ENCODE measurements at regions of chr20 and their contacts with region 1.

Region 1: GRCh38 chr20:35619196-35620095 is 3.8 kb downstream of the SPAG4 start:
- DNase-seq: peak; percentile 54 to 84 (median 68)
- ATAC-seq: peak; percentile 31
- H3K4me3 ChIP-seq: peak overlapping the region; percentile 70
- H3K4me3 Mint-ChIP-seq: peak overlapping the region; percentile 87 to 98 (median 91)
- H3K27ac ChIP-seq: peak overlapping the region; percentile 27
- H3K27ac Mint-ChIP-seq: peak overlapping the region; percentile 62 to 90 (median 85)
- H3K4me1 ChIP-seq: peaks cover 16 to 28% of the 10 kb centered on the region in 2 donors
- H3K4me1 Mint-ChIP-seq: peaks cover 13 to 45% (median 34%) of the 10 kb centered on the region in 7 donors
- H3K27me3 ChIP-seq: no peaks in the 10 kb centered on the region
- H3K27me3 Mint-ChIP-seq: peaks cover 0 to 3% (median 0%) of the 10 kb centered on the region in 5 donors

Region 2: DNA sequence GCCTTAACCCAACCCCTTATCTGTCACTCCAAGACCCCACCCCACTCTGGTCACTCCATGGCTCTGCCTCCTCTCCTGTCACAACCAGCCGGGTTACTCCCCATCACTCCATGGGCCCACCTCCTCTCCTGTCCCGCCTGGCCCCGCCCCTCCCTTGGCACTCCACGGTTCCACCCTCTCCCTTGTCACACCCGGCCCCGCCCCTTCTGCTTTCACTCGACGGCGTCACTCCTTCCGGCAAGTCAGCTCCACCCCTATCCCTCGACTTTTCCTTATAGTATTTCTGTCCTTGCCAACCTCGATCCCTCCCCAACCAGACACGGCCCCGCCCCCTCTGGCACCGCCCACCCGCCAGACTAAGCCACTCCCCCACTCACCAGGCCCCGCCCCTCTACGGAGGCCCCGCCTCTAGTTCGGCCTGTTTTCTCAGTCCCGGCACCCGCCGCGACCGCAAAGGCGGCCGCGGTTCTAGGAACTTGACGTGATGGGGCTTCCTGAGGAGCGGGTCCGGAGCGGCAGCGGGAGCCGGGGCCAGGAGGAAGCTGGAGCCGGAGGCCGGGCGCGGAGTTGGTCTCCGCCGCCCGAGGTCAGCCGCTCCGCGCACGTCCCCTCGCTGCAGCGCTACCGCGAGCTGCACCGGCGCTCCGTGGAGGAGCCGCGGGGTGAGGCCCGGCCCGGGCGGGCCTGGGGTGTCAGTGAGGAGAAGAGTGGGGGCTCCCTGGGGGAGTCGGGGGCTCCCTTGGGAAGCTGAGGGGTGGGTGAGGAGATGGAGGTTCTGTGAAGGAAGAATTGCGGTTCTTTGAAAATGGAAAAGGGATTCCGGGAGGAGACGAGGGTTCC is 743.1 kb before region 1 on chr20 and contains the start of gene ACSS2:
- CTCF ChIA-PET with region 1: no interaction called
- POLR2A ChIA-PET with region 1: no interaction called
- intact Hi-C with region 1: loop called in 1 of 2 experiments (anchors 5 kb)
- DNase-seq: peak; percentile 88 to 99 (median 92)
- ATAC-seq: peak; percentile 91
- H3K4me3 ChIP-seq: peak within 1 kb of the TSS; percentile 87
- H3K4me3 Mint-ChIP-seq: peak within 1 kb of the TSS; percentile 78 to 99 (median 90)
- H3K27ac ChIP-seq: peak within 1 kb of the TSS; percentile 74
- H3K27ac Mint-ChIP-seq: peak within 1 kb of the TSS; percentile 68 to 96 (median 88)
- H3K4me1 ChIP-seq: peaks cover 35 to 43% of the 10 kb centered on the region in 2 donors
- H3K4me1 Mint-ChIP-seq: peaks cover 47 to 79% (median 72%) of the 10 kb centered on the region in 7 donors
- H3K27me3 ChIP-seq: no peaks in the 10 kb centered on the region
- H3K27me3 Mint-ChIP-seq: no peaks in the 10 kb centered on the region
- total RNA-seq, gene ACSS2: 37.3 to 51.7 (median 43.3) TPM

Region 3: GRCh38 chr20:35454881-35455609 is 164.4 kb before region 1 on chr20 and contains the start of gene CEP250:
- CTCF ChIA-PET with region 1: no interaction called
- POLR2A ChIA-PET with region 1: interaction called, 5 read pairs
- intact Hi-C with region 1: loop called (anchors 1 kb)
- DNase-seq: peak; percentile 89 to 97 (median 96)
- ATAC-seq: peak; percentile 99
- H3K4me3 ChIP-seq: peak within 1 kb of the TSS; percentile 94
- H3K4me3 Mint-ChIP-seq: peak within 1 kb of the TSS; percentile 82 to 98 (median 93)
- H3K27ac ChIP-seq: peak within 1 kb of the TSS; percentile 94
- H3K27ac Mint-ChIP-seq: peak within 1 kb of the TSS; percentile 86 to 99 (median 98)
- H3K4me1 ChIP-seq: no peaks in the 10 kb centered on the region
- H3K4me1 Mint-ChIP-seq: peaks cover 0 to 38% (median 23%) of the 10 kb centered on the region in 7 donors
- H3K27me3 ChIP-seq: no peaks in the 10 kb centered on the region
- H3K27me3 Mint-ChIP-seq: no peaks in the 10 kb centered on the region
- total RNA-seq, gene CEP250: 34.5 to 75.0 (median 70.7) TPM

Region 4: GRCh38 chr20:35541783-35542588 is 77.5 kb before region 1 on chr20 and contains the start of gene ERGIC3:
- CTCF ChIA-PET with region 1: interaction called, 6 read pairs
- POLR2A ChIA-PET with region 1: interaction called, 5 read pairs
- intact Hi-C with region 1: loop called (anchors 1 kb)
- DNase-seq: peak; percentile 94 to 98 (median 95)
- ATAC-seq: peak; percentile 100
- H3K4me3 ChIP-seq: peak within 1 kb of the TSS; percentile 82
- H3K4me3 Mint-ChIP-seq: peak within 1 kb of the TSS; percentile 88 to 92 (median 91)
- H3K27ac ChIP-seq: peak within 1 kb of the TSS; percentile 77
- H3K27ac Mint-ChIP-seq: peak within 1 kb of the TSS; percentile 82 to 96 (median 91)
- H3K4me1 ChIP-seq: peaks cover 11 to 12% of the 10 kb centered on the region in 2 donors
- H3K4me1 Mint-ChIP-seq: peaks cover 9 to 32% (median 23%) of the 10 kb centered on the region in 7 donors
- H3K27me3 ChIP-seq: no peaks in the 10 kb centered on the region
- H3K27me3 Mint-ChIP-seq: no peaks in the 10 kb centered on the region
- total RNA-seq, gene ERGIC3: 139 to 158 (median 148) TPM

Region 5: DNA sequence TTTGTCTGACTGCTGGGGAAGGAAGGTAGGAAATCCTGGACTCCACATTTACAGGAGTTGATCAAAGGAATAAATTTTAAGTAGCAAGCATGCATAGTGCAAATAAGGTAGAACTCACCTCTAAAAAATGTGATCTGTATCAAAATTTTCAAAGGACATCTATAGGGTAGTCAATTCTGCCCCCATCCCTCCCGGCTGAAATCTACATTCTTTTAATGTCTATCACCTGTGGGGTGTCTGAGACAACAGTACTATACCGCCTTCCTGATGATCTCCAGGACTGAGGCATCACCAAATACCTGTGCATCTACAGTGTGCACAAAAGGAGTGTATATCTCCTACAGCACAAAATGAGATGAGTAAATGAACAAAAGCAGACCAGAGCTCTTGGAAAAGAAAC is 25.4 kb after region 1 on chr20:
- CTCF ChIA-PET with region 1: no interaction called
- POLR2A ChIA-PET with region 1: no interaction called
- intact Hi-C with region 1: no loop called
- DNase-seq: no peak
- ATAC-seq: no peak
- H3K4me3 ChIP-seq: no peak overlapping the region
- H3K4me3 Mint-ChIP-seq: no peak overlapping the region
- H3K27ac ChIP-seq: no peak overlapping the region
- H3K27ac Mint-ChIP-seq: peak overlapping the region in 7 of 9 donors; percentile 21 to 80 (median 43)
- H3K4me1 ChIP-seq: peaks cover 0 to 15% of the 10 kb centered on the region in 2 donors
- H3K4me1 Mint-ChIP-seq: peaks cover 64 to 94% (median 90%) of the 10 kb centered on the region in 7 donors
- H3K27me3 ChIP-seq: no peaks in the 10 kb centered on the region
- H3K27me3 Mint-ChIP-seq: no peaks in the 10 kb centered on the region

Region 6: DNA sequence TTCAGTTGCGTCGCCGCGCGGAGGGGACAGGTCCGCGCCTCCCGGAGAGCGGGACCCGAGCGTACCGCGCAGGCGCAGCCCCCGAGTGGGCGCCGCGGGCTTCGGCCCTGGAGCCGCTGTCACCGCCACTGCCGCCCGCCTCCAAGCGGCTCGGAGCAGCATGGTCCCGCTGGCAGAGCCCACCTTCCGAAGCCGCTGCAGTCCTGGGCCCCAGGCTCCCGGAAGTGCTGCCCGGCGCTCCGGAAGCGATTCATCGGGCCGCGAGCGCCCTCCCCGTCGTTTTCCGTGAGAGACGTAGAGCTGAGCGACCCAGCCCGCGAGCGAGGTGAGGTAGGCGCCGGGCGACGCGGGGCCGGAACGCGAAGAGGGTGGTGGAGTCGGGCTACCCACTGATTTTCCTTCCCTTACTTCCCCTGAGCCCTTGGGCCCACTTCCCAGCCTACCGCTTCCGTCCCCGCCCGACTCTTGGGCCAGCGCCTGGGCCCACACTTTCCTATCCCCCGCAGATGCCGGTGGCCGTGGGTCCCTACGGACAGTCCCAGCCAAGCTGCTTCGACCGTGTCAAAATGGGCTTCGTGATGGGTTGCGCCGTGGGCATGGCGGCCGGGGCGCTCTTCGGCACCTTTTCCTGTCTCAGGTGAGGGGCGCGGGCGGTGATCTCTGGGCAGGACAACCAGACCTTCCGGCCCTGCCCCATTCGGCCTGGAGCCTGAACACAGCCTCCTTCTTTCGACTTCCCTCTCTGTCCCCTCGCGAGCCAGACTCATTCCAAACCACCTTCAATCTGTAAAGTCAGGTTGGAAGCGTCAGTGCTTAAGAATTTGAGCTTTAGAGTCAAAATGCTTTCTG is 79.9 kb after region 1 on chr20 and contains the starts of genes NFS1 and ROMO1:
- CTCF ChIA-PET with region 1: no interaction called
- POLR2A ChIA-PET with region 1: interaction called, 7 read pairs
- intact Hi-C with region 1: loop called (anchors 1 kb)
- DNase-seq: peak; percentile 71 to 87 (median 82)
- ATAC-seq: peak; percentile 92
- H3K4me3 ChIP-seq: peak within 1 kb of the TSS; percentile 89
- H3K4me3 Mint-ChIP-seq: peak within 1 kb of the TSS; percentile 90 to 99 (median 98)
- H3K27ac ChIP-seq: peak within 1 kb of the TSS; percentile 87
- H3K27ac Mint-ChIP-seq: peak within 1 kb of the TSS; percentile 95 to 99 (median 97)
- H3K4me1 ChIP-seq: peaks cover 13 to 16% of the 10 kb centered on the region in 2 donors
- H3K4me1 Mint-ChIP-seq: peaks cover 15 to 66% (median 52%) of the 10 kb centered on the region in 7 donors
- H3K27me3 ChIP-seq: no peaks in the 10 kb centered on the region
- H3K27me3 Mint-ChIP-seq: no peaks in the 10 kb centered on the region
- total RNA-seq, gene NFS1: 18.2 to 41.1 (median 35.0) TPM
- total RNA-seq, gene ROMO1: 33.2 to 85.5 (median 38.5) TPM

Region 7: DNA sequence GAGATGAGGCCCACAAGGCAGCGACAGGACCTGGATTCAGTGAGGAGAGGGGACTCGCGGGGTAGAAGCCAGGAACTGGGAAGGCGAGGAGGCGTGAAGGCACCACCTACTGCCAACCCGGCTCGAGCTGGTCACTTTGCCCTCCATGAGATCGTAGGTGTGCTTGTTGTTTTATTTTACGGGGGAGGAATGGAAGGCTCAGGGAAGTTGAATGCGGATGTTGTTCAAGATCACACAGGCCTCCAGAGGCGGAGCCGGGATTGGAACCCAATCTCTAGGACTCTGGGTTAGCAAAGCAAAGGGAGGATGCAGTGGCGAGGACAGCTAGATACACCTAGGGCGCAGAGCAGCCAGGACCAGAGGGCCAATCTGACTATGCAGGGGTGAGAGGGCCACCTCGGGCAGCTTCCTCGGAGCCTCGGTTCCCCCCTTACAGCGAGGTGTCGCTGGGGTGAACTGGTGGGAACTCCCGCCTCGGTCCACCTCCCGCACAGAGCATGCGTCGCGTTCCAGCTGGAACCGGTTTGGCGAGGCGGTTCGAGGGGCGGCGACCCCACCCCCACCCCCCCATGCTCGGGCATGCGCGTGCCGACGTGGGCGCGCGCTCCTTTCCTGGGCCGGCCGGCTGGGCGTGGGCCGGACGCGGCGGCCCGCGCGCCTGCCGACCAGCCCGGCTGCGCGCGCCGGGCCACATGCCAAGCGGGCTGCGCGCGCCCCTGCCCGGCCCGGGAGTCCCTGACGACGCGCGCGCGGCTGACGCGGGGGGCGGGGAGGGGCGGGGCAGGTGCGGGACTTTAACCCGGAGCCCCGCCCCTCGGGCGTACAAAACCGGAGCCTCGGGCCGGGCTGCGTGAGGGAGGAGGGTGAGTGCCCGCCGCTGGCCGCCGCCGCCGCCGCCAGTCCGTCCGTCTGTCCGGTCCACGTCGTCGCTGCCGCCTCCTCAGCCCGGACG is 841.5 kb after region 1 on chr20:
- CTCF ChIA-PET with region 1: no interaction called
- POLR2A ChIA-PET with region 1: no interaction called
- intact Hi-C with region 1: loop called in 1 of 2 experiments (anchors 2 kb)
- DNase-seq: peak; percentile 76 to 89 (median 86)
- ATAC-seq: peak; percentile 93
- H3K4me3 ChIP-seq: peak overlapping the region; percentile 73
- H3K4me3 Mint-ChIP-seq: peak overlapping the region; percentile 74 to 97 (median 83)
- H3K27ac ChIP-seq: peak overlapping the region; percentile 85
- H3K27ac Mint-ChIP-seq: peak overlapping the region; percentile 88 to 97 (median 95)
- H3K4me1 ChIP-seq: peaks cover 38 to 39% of the 10 kb centered on the region in 2 donors
- H3K4me1 Mint-ChIP-seq: peaks cover 34 to 51% (median 45%) of the 10 kb centered on the region in 7 donors
- H3K27me3 ChIP-seq: no peaks in the 10 kb centered on the region
- H3K27me3 Mint-ChIP-seq: peaks cover 0 to 6% (median 0%) of the 10 kb centered on the region in 5 donors